Activated CD4-positive, alpha-beta T cell treated with anti-CD3 and anti-CD28 coated beads for 36 hours (primary cell): ENCODE measurements at regions of chr1 and their contacts with region 1.

Region 1: DNA sequence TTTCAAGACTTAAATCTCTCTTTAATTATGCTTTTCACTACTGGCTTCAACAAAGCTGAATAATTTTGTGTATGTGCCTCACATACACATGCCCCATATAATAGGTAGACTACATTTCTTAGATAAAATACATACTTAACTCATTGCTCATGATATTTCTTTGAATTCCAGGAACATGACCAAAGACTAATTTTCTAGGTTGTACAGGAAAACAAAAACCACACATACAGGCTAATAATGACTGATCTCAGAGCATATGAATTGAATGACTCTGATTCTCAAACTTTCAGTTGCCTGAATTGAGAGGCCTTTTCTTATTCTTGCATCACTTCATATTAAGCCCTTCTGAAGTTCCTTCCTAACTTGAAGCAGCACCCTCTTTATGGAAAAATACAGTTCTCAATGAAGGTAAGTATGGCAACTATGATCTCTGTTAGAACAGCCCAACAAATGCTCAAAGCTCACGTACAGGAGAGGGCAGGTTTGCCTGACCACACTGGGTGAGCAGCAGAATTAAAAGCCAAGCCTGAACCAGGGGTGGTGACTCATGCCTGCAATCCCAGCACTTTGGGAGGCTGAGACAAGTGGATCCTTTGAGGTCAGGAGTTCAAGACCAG is 22.6 kb upstream of the UAP1 start:
- DNase-seq: peak; percentile 27
- ATAC-seq: peak; percentile 79
- H3K4me3 Mint-ChIP-seq: no peak overlapping the region
- H3K27ac Mint-ChIP-seq: peak overlapping the region; percentile 60
- H3K4me1 Mint-ChIP-seq: peaks cover 4% of the 10 kb centered on the region
- H3K27me3 Mint-ChIP-seq: no peaks in the 10 kb centered on the region

Region 2: GRCh38 chr1:162527324-162527723 is 11.6 kb before region 1 on chr1:
- CTCF ChIA-PET with region 1: interaction called, 14 read pairs
- POLR2A ChIA-PET with region 1: no interaction called
- intact Hi-C with region 1: no loop called
- DNase-seq: no peak
- ATAC-seq: no peak
- H3K4me3 Mint-ChIP-seq: no peak overlapping the region
- H3K27ac Mint-ChIP-seq: no peak overlapping the region
- H3K4me1 Mint-ChIP-seq: no peaks in the 10 kb centered on the region
- H3K27me3 Mint-ChIP-seq: no peaks in the 10 kb centered on the region

Region 3: GRCh38 chr1:163410073-163410999 is 871.4 kb after region 1 on chr1:
- CTCF ChIA-PET with region 1: no interaction called
- POLR2A ChIA-PET with region 1: no interaction called
- intact Hi-C with region 1: no loop called
- DNase-seq: peak; percentile 56
- ATAC-seq: no peak
- H3K4me3 Mint-ChIP-seq: no peak overlapping the region
- H3K27ac Mint-ChIP-seq: no peak overlapping the region
- H3K4me1 Mint-ChIP-seq: peaks cover 2% of the 10 kb centered on the region
- H3K27me3 Mint-ChIP-seq: peaks cover 14% of the 10 kb centered on the region